Right ventricle myocardium superior (tissue), 1 donor: ENCODE measurements at regions of chr3 and their contacts with region 1.

Region 1: GRCh38 chr3:64399205-64399800 is 174.0 kb upstream of the PRICKLE2 start:
- DNase-seq: no peak
- ATAC-seq: peak; percentile 79

Region 2: GRCh38 chr3:64121750-64122311 is 277.5 kb before region 1 on chr3:
- intact Hi-C with region 1: no loop called
- DNase-seq: no peak
- ATAC-seq: peak; percentile 28

Region 3: GRCh38 chr3:64267721-64268604 is 131.3 kb before region 1 on chr3:
- intact Hi-C with region 1: no loop called
- DNase-seq: peak; percentile 75
- ATAC-seq: peak; percentile 81

Region 4: GRCh38 chr3:64484289-64484992 is 85.1 kb after region 1 on chr3:
- intact Hi-C with region 1: loop called (anchors 10 kb)
- DNase-seq: peak; percentile 84
- ATAC-seq: peak; percentile 98